HCT116 (cell line): ENCODE measurements at regions of chr16 and their contacts with region 1.

Region 1: DNA sequence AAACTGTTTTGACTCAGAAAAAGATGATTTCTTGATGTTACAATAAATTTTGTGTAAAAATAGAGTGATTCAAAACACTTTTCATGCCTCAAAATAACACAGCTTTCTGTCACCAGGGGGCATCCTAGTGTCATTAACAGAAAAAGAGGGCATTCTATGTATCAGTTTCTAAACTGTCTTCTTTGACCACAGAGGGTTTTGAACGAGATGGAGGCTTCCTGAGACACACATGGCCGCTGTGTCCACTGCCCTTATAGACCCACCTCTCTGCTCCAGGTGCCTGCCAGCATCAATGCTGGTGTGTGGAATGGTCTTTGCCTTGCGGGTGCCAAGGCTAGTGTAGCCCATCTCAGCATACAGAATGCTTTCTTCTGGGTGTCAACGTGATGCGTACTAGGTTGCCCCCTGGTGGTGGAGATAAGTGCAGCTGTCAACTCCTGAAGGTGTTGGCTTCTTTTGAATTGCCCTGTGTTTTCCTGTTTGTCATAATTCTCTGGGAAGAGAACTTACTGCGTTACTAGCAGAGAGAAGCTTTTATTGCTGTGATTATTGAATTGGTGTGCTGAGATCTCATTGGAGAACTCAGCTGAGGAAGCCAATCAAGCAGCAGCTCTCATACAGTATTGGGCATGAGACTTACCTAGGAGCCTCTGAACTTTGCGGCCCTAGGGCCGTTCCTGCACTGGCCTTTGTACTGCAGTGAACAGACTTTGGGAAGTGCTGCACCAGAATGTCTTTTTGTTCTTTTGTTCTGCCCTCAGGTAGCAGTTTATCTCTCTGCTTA is 38.6 kb downstream of the USP10 start:
- DNase-seq: peak; percentile 85
- ATAC-seq: peak; percentile 93
- H3K4me3 ChIP-seq: no peak overlapping the region
- H3K27ac ChIP-seq: peak overlapping the region; percentile 9; the same call in 1 of the 2 replicates
- H3K4me1 ChIP-seq: peaks cover 21 to 39% of the 10 kb centered on the region in 2 experiments
- H3K27me3 ChIP-seq: no peaks in the 10 kb centered on the region
- CTCF ChIP-seq: peak; percentile 96 to 99 (median 98)
- POLR2A ChIP-seq: no peak
- RAD21 ChIP-seq: peak; percentile 78

Region 2: GRCh38 chr16:84504420-84505248 is 233.8 kb before region 1 on chr16 and contains the start of gene MEAK7:
- CTCF ChIA-PET with region 1: interaction called, 12 read pairs
- POLR2A ChIA-PET with region 1: no interaction called
- RAD21 ChIA-PET with region 1: no interaction called
- intact Hi-C with region 1: no loop called
- DNase-seq: peak; percentile 98
- ATAC-seq: peak; percentile 84
- H3K4me3 ChIP-seq: peak within 1 kb of the TSS; percentile 88 to 98
- H3K27ac ChIP-seq: peak within 1 kb of the TSS; percentile 82
- H3K4me1 ChIP-seq: peaks cover 54 to 69% of the 10 kb centered on the region in 2 experiments
- H3K27me3 ChIP-seq: no peaks in the 10 kb centered on the region
- CTCF ChIP-seq: no peak
- POLR2A ChIP-seq: peak; percentile 67
- RAD21 ChIP-seq: no peak
- total RNA-seq, gene MEAK7: 32.2 TPM

Region 3: DNA sequence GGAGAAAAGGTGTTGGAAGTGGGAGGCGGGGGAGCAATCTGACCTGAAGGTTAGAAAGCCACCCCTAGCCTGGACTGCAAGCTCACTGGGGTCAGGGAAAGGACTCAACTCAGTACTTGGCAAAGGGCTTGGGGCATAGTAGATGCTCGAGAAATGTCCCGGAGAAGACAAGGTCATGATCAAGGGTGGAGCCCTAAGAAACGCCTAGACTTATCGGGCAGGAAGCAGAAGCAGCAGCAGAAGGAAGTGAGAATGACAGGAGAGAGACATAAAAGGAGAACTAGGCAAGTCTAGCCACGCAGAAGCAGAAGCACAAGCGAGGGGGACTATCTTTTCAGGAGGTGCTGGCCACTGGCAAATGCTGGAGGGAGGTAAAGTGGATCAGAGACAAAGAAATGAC is 130.8 kb before region 1 on chr16:
- CTCF ChIA-PET with region 1: no interaction called
- POLR2A ChIA-PET with region 1: no interaction called
- RAD21 ChIA-PET with region 1: no interaction called
- intact Hi-C with region 1: no loop called
- DNase-seq: no peak
- ATAC-seq: no peak
- H3K4me3 ChIP-seq: no peak overlapping the region
- H3K27ac ChIP-seq: no peak overlapping the region
- H3K4me1 ChIP-seq: peaks cover 18 to 40% of the 10 kb centered on the region in 2 experiments
- H3K27me3 ChIP-seq: no peaks in the 10 kb centered on the region
- CTCF ChIP-seq: no peak
- POLR2A ChIP-seq: no peak
- RAD21 ChIP-seq: no peak

Region 4: GRCh38 chr16:84617791-84618580 is 120.5 kb before region 1 on chr16 and contains the start of gene COTL1:
- CTCF ChIA-PET with region 1: interaction called, 34 read pairs
- POLR2A ChIA-PET with region 1: no interaction called
- RAD21 ChIA-PET with region 1: interaction called in 1 of 2 experiments, 3 read pairs
- intact Hi-C with region 1: loop called (anchors 1 kb)
- DNase-seq: peak; percentile 96
- ATAC-seq: peak; percentile 76
- H3K4me3 ChIP-seq: peak within 1 kb of the TSS; percentile 82 to 85
- H3K27ac ChIP-seq: peak within 1 kb of the TSS; percentile 86
- H3K4me1 ChIP-seq: peaks cover 18 to 64% of the 10 kb centered on the region in 2 experiments
- H3K27me3 ChIP-seq: no peaks in the 10 kb centered on the region
- CTCF ChIP-seq: no peak
- POLR2A ChIP-seq: peak; percentile 85
- RAD21 ChIP-seq: no peak
- total RNA-seq, gene COTL1: 276 TPM

Region 5: DNA sequence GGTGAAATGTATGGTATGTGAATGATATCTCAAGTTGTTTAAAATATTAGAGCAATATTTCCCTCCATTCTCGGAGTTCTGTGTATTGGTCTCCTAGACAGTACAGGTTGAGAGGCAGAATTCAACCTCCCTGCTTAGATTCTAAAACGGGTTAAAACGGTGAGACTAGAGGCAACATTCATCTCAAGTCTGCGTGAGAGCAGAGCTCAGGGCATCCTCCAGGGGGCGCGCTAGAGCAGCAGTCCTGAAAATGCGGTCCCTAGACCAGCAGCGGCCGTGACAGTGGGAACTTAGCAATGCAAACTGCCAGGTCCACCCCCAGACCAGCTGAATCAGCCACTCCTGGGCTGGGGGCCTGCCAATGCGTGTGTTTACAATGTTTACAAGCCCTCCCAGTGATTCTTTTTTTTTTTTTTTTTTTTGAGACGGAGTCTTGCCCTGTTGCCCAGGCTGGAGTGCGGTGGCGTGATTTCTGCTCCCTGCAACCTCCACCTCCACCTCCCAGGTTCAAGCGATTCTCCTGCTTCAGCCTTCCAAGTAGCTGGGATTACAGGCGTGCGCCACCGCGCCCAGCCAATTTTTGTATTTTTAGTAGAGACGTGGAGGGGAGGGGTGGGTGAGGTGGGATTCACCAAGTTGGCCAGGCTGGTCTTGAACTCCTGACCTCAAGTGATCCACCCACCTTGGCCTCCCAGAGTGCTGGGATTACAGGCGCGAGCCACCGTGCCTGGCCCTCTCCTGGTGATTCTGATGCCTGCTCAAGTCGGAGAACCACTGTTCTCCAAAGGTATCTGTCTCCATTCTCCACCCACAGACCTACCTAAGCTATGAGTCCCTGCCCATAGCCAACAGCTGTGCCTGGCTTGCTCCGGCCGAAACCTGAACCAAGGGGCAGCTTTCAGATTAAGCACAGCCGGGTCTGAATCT is 65.9 kb before region 1 on chr16:
- CTCF ChIA-PET with region 1: interaction called, 10 read pairs
- POLR2A ChIA-PET with region 1: no interaction called
- RAD21 ChIA-PET with region 1: no interaction called
- intact Hi-C with region 1: no loop called
- DNase-seq: peak; percentile 48
- ATAC-seq: peak; percentile 96
- H3K4me3 ChIP-seq: no peak overlapping the region
- H3K27ac ChIP-seq: no peak overlapping the region
- H3K4me1 ChIP-seq: peaks cover 0 to 5% of the 10 kb centered on the region in 2 experiments; a peak in 1 of 4 replicates
- H3K27me3 ChIP-seq: peaks cover 13% of the 10 kb centered on the region; the same call in 1 of the 2 replicates
- CTCF ChIP-seq: peak; percentile 85 to 97 (median 95)
- POLR2A ChIP-seq: no peak
- RAD21 ChIP-seq: peak; percentile 72

Region 6: GRCh38 chr16:84720177-84720579 is 18.3 kb before region 1 on chr16:
- CTCF ChIA-PET with region 1: interaction called, 67 read pairs
- POLR2A ChIA-PET with region 1: no interaction called
- RAD21 ChIA-PET with region 1: no interaction called
- intact Hi-C with region 1: no loop called
- DNase-seq: no peak
- ATAC-seq: no peak
- H3K4me3 ChIP-seq: no peak overlapping the region
- H3K27ac ChIP-seq: no peak overlapping the region
- H3K4me1 ChIP-seq: peaks cover 10 to 19% of the 10 kb centered on the region in 2 experiments; a peak in 3 of 4 replicates
- H3K27me3 ChIP-seq: no peaks in the 10 kb centered on the region
- CTCF ChIP-seq: no peak
- POLR2A ChIP-seq: no peak
- RAD21 ChIP-seq: no peak

Region 7: GRCh38 chr16:84754353-84754856 is 16.0 kb after region 1 on chr16:
- CTCF ChIA-PET with region 1: interaction called, 71 read pairs
- POLR2A ChIA-PET with region 1: no interaction called
- RAD21 ChIA-PET with region 1: no interaction called
- intact Hi-C with region 1: no loop called
- DNase-seq: peak; percentile 79
- ATAC-seq: peak; percentile 86
- H3K4me3 ChIP-seq: no peak overlapping the region
- H3K27ac ChIP-seq: no peak overlapping the region
- H3K4me1 ChIP-seq: peaks cover 0 to 13% of the 10 kb centered on the region in 2 experiments; a peak in 1 of 4 replicates
- H3K27me3 ChIP-seq: no peaks in the 10 kb centered on the region
- CTCF ChIP-seq: peak; percentile 82 to 97 (median 86)
- POLR2A ChIP-seq: no peak
- RAD21 ChIP-seq: peak; percentile 90

Region 8: GRCh38 chr16:84952335-84953189 is 214.1 kb after region 1 on chr16:
- CTCF ChIA-PET with region 1: interaction called, 13 read pairs
- POLR2A ChIA-PET with region 1: no interaction called
- RAD21 ChIA-PET with region 1: no interaction called
- intact Hi-C with region 1: no loop called
- DNase-seq: peak; percentile 76
- ATAC-seq: peak; percentile 94
- H3K4me3 ChIP-seq: no peak overlapping the region
- H3K27ac ChIP-seq: no peak overlapping the region
- H3K4me1 ChIP-seq: peaks cover 0 to 3% of the 10 kb centered on the region in 2 experiments; a peak in 1 of 4 replicates
- H3K27me3 ChIP-seq: no peaks in the 10 kb centered on the region
- CTCF ChIP-seq: peak; percentile 93 to 96 (median 95)
- POLR2A ChIP-seq: no peak
- RAD21 ChIP-seq: peak; percentile 87